Upper lobe of right lung (tissue), 1 donor: ENCODE measurements at regions of chr1 and their contacts with region 1.

Region 1: DNA sequence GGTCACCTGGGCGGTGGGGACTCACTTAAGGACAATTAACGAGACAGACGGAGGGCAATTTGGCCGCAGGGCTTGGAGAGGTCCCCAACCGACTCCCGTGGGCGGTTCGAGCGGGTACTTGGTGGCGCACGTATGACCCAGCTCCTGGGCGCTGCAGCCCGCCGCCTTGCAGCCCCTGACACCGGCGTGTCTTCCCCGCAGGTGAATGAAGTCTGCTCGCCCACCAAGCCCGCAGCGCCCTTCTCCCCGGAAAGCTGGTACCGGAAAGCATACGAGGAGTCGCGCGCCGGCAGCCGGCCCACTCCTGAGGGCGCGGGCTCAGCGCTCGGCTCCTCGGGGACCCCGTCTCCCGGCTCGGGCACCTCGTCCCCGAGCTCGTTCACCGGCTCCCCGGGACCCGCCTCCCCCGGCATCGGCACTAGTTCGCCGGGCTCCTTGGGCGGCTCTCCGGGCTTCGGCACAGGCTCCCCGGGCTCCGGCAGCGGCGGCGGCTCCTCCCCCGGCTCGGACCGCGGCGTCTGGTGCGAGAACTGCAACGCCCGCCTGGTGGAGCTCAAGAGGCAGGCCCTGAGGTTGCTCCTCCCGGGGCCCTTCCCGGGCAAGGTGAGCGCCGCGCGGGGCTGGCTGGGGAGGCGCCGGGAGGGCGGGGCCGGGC is 1.4 kb downstream of the KIF26B start:
- DNase-seq: peak; percentile 94
- ATAC-seq: peak; percentile 96
- H3K4me3 ChIP-seq: peak overlapping the region; percentile 63
- H3K27ac ChIP-seq: no peak overlapping the region
- H3K4me1 ChIP-seq: peaks cover 28% of the 10 kb centered on the region
- H3K27me3 ChIP-seq: peaks cover 37% of the 10 kb centered on the region
- CTCF ChIP-seq: peak; percentile 69

Region 2: DNA sequence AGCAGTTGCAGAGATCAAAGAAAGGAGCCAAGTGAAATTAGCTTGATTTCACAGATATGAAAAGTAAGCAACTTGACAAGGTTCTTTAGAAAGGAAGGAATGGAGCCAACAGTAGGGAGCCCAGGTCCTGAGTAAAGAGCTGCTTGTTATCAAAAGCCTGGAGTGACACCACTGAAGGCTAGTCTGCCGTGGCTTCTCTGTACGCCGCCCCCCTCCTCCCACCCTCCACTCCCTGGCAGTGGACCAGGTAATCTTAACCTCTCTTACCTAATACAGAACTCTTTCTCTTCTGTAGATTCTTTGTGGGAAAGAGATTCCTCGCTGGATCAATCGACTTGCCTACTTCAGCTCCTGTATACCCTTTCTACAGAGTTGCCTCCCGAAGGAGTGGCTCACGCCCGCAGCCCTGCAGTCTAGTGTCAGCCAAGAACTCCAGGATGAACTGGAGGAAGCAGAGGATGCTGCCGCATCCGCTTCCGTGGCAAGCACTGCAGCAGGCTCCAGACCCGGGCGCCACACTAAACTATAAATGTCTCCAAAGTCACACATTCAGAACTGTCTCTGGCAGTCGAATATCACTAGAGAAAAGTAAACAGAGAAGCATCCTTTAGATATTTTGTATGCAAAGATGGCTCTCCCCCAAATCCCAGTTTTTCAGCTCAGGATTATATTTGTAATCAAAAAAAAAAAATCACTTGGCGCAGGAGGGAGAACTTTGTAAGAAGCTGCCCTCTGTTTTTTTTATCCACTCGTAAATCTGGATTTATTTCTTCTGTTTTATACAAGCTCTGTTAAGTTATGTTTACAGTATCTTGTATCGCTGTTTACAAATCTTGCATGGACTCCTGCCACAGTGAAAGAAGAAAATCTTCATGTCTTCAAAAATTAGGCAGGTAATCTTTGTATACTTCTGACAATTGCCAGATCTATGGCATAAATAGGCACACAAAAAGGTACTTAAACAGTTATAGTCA is 450.7 kb before region 1 on chr1:
- intact Hi-C with region 1: no loop called
- DNase-seq: no peak
- ATAC-seq: peak; percentile 69
- H3K4me3 ChIP-seq: no peak overlapping the region
- H3K27ac ChIP-seq: no peak overlapping the region
- H3K4me1 ChIP-seq: peaks cover 5% of the 10 kb centered on the region
- H3K27me3 ChIP-seq: no peaks in the 10 kb centered on the region
- CTCF ChIP-seq: no peak

Region 3: GRCh38 chr1:245272676-245273075 is 116.5 kb after region 1 on chr1:
- intact Hi-C with region 1: no loop called
- DNase-seq: no peak
- ATAC-seq: no peak
- H3K4me3 ChIP-seq: no peak overlapping the region
- H3K27ac ChIP-seq: no peak overlapping the region
- H3K4me1 ChIP-seq: no peaks in the 10 kb centered on the region
- H3K27me3 ChIP-seq: no peaks in the 10 kb centered on the region
- CTCF ChIP-seq: no peak

Region 4: DNA sequence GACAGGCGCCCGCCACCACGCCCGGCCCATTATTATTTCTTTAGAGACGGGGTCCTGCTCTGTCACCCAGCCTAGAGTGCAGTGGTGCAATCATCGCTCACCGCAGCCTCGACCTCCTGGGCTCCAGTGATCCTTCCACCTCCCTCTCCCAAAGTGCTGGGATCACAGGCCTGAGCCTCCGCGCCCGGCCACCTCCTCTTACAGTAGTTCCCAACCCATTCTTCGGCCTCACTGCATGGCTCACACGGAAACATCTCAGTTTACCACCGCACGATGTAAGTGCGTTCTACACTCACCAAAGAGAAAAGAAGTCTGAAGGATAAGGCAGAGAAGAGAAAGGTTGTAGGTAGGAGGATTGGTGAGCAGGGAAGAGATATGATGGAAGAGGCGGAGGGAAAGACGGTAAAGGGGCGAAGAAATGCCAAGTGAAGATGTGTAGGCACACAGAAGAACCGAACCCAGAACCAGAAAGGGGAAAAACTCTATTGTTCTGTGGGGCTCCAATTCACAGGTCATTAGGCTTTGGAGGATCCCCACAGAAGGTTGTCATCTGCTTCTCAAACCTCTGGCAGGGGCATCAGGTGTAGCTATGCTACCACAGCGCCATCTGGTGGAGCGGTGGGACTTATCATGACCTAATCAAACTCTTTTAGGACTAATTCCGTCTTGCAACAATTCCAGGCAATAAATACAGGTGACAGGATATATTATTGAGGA is 846.7 kb after region 1 on chr1:
- intact Hi-C with region 1: loop called (anchors 10 kb)
- DNase-seq: peak; percentile 90
- ATAC-seq: peak; percentile 91
- H3K4me3 ChIP-seq: no peak overlapping the region
- H3K27ac ChIP-seq: no peak overlapping the region
- H3K4me1 ChIP-seq: no peaks in the 10 kb centered on the region
- H3K27me3 ChIP-seq: no peaks in the 10 kb centered on the region
- CTCF ChIP-seq: peak; percentile 91